ENCODE measurements at regions of chr1 and their contacts with region 1.

Region 1: GRCh38 chr1:66968574-66968973 is 43.8 kb downstream of the MIER1 start:
- DNase-seq: no peak
- ATAC-seq: no peak
- H3K4me3 Mint-ChIP-seq: no peak overlapping the region
- H3K27ac Mint-ChIP-seq: no peak overlapping the region
- H3K4me1 Mint-ChIP-seq: peaks cover 9% of the 10 kb centered on the region
- H3K27me3 Mint-ChIP-seq: no peaks in the 10 kb centered on the region

Region 2: DNA sequence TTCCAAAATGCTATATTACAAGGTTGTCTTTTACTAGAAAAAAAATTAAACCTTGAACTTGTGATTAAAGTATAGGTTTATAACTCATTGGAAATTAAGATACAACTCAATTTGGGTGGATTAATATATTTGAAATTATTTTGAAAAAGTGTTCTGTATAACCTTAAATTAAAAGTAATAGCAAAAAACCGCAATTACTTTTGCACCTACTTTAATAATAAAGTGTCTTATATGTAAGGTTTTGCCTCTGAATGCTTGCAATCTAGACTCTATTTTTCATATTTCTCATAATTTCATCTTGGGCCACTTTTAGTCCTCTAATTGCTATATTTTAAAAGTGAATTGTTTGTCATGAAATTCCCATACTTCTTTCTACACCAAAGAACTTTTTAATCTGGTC is 304.8 kb before region 1 on chr1:
- CTCF ChIA-PET with region 1: no interaction called
- POLR2A ChIA-PET with region 1: no interaction called
- intact Hi-C with region 1: no loop called
- DNase-seq: no peak
- ATAC-seq: no peak
- H3K4me3 Mint-ChIP-seq: no peak overlapping the region
- H3K27ac Mint-ChIP-seq: no peak overlapping the region
- H3K4me1 Mint-ChIP-seq: no peaks in the 10 kb centered on the region
- H3K27me3 Mint-ChIP-seq: peaks cover 5% of the 10 kb centered on the region

Region 3: DNA sequence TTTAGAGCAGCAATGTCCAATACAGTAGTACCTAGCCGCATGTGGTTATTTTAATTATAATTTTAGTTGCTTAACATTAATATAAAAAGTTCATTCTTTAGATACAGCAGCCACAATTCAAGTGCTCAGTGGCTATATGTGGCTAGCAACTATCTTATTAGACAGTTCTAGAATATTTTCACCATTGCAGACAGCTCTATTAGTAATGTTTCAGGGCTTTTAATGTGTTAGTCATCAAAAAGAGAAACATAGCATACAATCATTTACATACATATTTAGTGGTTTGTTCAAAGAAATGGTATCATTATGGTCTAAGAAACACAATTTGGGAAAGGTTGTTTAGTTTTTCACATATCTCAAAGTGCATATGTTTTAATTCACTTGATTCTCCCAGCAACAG is 282.9 kb before region 1 on chr1:
- CTCF ChIA-PET with region 1: no interaction called
- POLR2A ChIA-PET with region 1: no interaction called
- intact Hi-C with region 1: no loop called
- DNase-seq: no peak
- ATAC-seq: no peak
- H3K4me3 Mint-ChIP-seq: no peak overlapping the region
- H3K27ac Mint-ChIP-seq: no peak overlapping the region
- H3K4me1 Mint-ChIP-seq: no peaks in the 10 kb centered on the region
- H3K27me3 Mint-ChIP-seq: peaks cover 4% of the 10 kb centered on the region

Region 4: DNA sequence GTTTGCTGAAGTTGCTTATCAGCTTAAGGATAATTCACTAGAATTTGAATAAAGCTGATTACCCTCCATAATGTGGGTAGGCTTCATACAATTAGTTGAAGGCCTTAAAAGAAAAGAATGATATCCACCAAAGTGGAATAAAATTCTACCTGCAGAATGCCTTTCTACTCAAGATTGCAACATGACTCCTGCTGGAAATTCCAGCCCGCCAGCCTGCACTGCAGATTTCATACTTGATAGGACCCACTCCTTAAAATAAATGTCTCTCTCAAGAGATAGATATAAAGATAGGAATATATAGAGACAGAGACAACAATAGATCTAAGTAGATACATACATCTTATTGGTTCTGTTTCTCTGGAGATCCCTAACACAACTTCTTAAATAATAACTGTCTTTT is 143.8 kb before region 1 on chr1:
- CTCF ChIA-PET with region 1: no interaction called
- POLR2A ChIA-PET with region 1: no interaction called
- intact Hi-C with region 1: no loop called
- DNase-seq: no peak
- ATAC-seq: no peak
- H3K4me3 Mint-ChIP-seq: no peak overlapping the region
- H3K27ac Mint-ChIP-seq: no peak overlapping the region
- H3K4me1 Mint-ChIP-seq: no peaks in the 10 kb centered on the region
- H3K27me3 Mint-ChIP-seq: no peaks in the 10 kb centered on the region

Region 5: DNA sequence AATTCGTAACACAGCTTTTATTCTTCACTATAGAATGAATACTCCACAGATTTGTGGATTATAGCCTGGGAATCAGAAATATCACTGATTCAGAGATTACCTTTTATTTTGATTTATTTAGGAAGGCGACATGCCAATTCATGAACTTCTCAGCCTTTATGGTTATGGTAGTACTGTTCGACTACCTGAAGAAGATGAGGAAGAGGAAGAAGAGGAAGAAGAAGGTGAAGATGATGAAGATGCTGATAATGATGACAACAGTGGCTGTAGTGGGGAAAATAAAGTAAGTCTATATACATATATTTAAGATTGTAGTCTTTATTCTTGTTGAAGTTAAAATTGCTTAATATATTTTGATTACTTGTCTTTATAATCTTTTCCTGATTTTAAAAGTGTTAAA is 10.6 kb before region 1 on chr1:
- CTCF ChIA-PET with region 1: interaction called, 10 read pairs
- POLR2A ChIA-PET with region 1: no interaction called
- intact Hi-C with region 1: no loop called
- DNase-seq: no peak
- ATAC-seq: no peak
- H3K4me3 Mint-ChIP-seq: no peak overlapping the region
- H3K27ac Mint-ChIP-seq: peak overlapping the region; percentile 66
- H3K4me1 Mint-ChIP-seq: peaks cover 42% of the 10 kb centered on the region
- H3K27me3 Mint-ChIP-seq: no peaks in the 10 kb centered on the region

Region 6: DNA sequence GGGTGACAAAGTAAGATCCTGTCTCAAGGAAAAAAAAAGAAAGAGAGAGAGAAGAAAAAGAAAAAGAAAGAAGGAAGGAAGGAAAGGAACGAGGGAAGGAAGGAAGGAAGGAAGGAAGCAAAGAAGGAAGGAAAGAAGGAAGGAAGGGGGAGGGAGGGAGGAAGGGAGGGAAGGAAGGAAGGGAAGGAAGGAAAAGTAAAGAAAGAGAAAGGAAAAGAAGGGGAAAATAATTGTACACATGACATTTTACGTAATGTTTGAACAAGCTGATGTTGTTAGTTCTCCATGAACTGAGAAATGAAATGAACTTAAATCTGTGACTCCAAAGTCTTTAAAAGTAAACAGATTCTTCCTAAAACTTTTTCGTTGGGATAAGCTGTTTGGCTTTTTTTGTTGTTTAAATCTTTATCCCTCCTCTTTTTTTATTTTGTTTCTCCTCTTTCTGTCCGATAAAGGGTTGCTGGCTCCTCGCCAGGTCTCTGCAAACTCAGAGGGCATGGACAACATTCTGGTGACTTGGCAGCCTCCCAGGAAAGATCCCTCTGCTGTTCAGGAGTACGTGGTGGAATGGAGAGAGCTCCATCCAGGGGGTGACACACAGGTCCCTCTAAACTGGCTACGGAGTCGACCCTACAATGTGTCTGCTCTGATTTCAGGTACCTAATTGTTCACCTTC is 398.9 kb after region 1 on chr1:
- CTCF ChIA-PET with region 1: no interaction called
- POLR2A ChIA-PET with region 1: no interaction called
- intact Hi-C with region 1: no loop called
- DNase-seq: no peak
- ATAC-seq: no peak
- H3K4me3 Mint-ChIP-seq: no peak overlapping the region
- H3K27ac Mint-ChIP-seq: no peak overlapping the region
- H3K4me1 Mint-ChIP-seq: peaks cover 15% of the 10 kb centered on the region
- H3K27me3 Mint-ChIP-seq: no peaks in the 10 kb centered on the region